Naive thymus-derived CD4-positive, alpha-beta T cell (primary cell): ENCODE measurements at regions of chr7 and their contacts with region 1.

Region 1: DNA sequence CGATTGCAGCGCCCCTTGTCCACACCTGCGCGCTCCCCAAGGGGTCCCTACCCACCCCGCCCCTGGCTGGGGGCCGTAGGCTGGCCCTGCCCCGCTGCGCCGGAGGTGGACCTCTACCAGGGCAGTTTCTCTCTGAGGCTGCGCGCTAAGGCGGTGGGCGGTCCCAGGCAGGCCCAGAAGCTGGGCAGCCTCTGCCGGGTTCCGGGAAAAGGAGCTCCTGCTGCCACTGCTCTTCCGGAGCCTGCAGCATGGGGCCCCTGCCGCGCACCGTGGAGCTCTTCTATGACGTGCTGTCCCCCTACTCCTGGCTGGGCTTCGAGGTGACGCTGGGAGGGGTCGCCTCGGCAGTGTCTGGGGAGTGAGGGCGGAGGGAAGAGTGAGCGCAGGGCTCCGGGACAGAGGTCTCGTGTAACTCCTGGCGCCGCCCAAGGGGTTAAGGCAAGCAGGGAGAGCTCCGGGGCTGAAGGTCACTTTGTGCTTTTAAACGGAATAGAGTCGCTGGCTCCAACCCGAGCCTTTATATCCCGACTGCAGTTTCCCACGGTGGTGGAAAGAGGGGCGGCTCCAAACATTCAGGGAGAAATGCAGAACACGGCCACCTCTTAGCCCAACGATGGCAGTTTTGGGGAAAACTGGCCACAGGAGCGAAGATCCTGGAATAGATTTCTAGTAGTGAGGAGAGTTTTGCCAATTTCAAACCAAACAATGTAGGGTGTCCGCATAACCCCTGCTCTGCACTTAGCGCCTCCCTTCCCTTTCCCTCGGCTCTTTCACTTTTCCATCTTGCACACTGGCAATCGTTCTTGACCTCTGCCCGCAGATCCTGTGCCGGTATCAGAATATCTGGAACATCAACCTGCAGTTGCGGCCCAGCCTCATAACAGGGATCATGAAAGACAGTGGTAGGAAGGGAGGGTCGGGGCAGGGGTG is at the start of gene GSTK1:
- DNase-seq: peak; percentile 62 to 86 (median 74)
- ATAC-seq: peak; percentile 97
- H3K4me3 ChIP-seq: peak within 1 kb of the TSS; percentile 90
- H3K4me3 Mint-ChIP-seq: peak within 1 kb of the TSS; percentile 93 to 99 (median 97)
- H3K27ac ChIP-seq: peak within 1 kb of the TSS; percentile 84
- H3K27ac Mint-ChIP-seq: peak within 1 kb of the TSS; percentile 76 to 99 (median 97)
- H3K4me1 ChIP-seq: peaks cover 34 to 40% of the 10 kb centered on the region in 2 donors
- H3K4me1 Mint-ChIP-seq: peaks cover 39 to 88% (median 66%) of the 10 kb centered on the region in 7 donors
- H3K27me3 ChIP-seq: no peaks in the 10 kb centered on the region
- H3K27me3 Mint-ChIP-seq: no peaks in the 10 kb centered on the region
- total RNA-seq, gene GSTK1: 253 to 385 (median 311) TPM

Region 2: GRCh38 chr7:141630621-141631020 is 1632.9 kb before region 1 on chr7:
- CTCF ChIA-PET with region 1: no interaction called
- POLR2A ChIA-PET with region 1: no interaction called
- intact Hi-C with region 1: no loop called
- DNase-seq: no peak
- ATAC-seq: no peak
- H3K4me3 ChIP-seq: no peak overlapping the region
- H3K4me3 Mint-ChIP-seq: no peak overlapping the region
- H3K27ac ChIP-seq: no peak overlapping the region
- H3K27ac Mint-ChIP-seq: no peak overlapping the region
- H3K4me1 ChIP-seq: no peaks in the 10 kb centered on the region
- H3K4me1 Mint-ChIP-seq: no peaks in the 10 kb centered on the region
- H3K27me3 ChIP-seq: no peaks in the 10 kb centered on the region
- H3K27me3 Mint-ChIP-seq: no peaks in the 10 kb centered on the region

Region 3: GRCh38 chr7:143248761-143249354 is 14.7 kb before region 1 on chr7:
- CTCF ChIA-PET with region 1: interaction called, 6 read pairs
- POLR2A ChIA-PET with region 1: interaction called, 129 read pairs
- intact Hi-C with region 1: loop called (anchors 1 kb)
- DNase-seq: no peak
- ATAC-seq: no peak
- H3K4me3 ChIP-seq: peak overlapping the region; percentile 13
- H3K4me3 Mint-ChIP-seq: peak overlapping the region in 9 of 10 donors; percentile 12 to 68 (median 34)
- H3K27ac ChIP-seq: no peak overlapping the region
- H3K27ac Mint-ChIP-seq: peak overlapping the region; percentile 25 to 89 (median 80)
- H3K4me1 ChIP-seq: peaks cover 56 to 60% of the 10 kb centered on the region in 2 donors
- H3K4me1 Mint-ChIP-seq: peaks cover 60 to 99% (median 97%) of the 10 kb centered on the region in 7 donors
- H3K27me3 ChIP-seq: no peaks in the 10 kb centered on the region
- H3K27me3 Mint-ChIP-seq: no peaks in the 10 kb centered on the region

Region 4: GRCh38 chr7:143279186-143280098 is 15.9 kb after region 1 on chr7:
- CTCF ChIA-PET with region 1: interaction called, 3 read pairs
- POLR2A ChIA-PET with region 1: interaction called, 115 read pairs
- intact Hi-C with region 1: loop called (anchors 2 kb)
- DNase-seq: peak in 6 of 9 donors; percentile 32 to 57 (median 40)
- ATAC-seq: peak; percentile 83
- H3K4me3 ChIP-seq: peak overlapping the region; percentile 42
- H3K4me3 Mint-ChIP-seq: peak overlapping the region; percentile 29 to 85 (median 75)
- H3K27ac ChIP-seq: peak overlapping the region; percentile 59
- H3K27ac Mint-ChIP-seq: peak overlapping the region; percentile 46 to 94 (median 85)
- H3K4me1 ChIP-seq: peaks cover 5 to 31% of the 10 kb centered on the region in 2 donors
- H3K4me1 Mint-ChIP-seq: peaks cover 19 to 42% (median 38%) of the 10 kb centered on the region in 7 donors
- H3K27me3 ChIP-seq: no peaks in the 10 kb centered on the region
- H3K27me3 Mint-ChIP-seq: no peaks in the 10 kb centered on the region